Right ventricle myocardium superior (tissue), 1 donor: ENCODE measurements at regions of chr13 and their contacts with region 1.

Region 1: DNA sequence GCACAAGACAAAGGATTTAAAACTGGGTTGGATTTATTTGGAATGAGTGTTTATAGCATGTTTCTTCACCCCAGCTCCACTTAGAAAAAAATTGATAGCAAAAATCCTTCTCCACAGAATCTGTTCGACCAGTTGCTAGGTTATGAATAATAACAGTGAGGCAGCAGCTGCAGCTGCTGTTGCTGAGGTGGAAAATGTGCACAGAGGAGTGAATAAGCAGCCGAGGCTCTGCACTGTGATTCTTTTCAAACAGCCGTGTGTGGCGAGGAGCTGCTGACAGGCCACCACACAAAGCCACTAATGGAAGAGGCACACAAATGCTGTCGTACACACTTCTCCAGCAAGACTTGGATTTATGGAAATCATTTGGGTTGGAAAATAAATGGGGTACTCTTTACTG is 6.4 kb upstream of the RASL11A start:
- DNase-seq: no peak
- ATAC-seq: peak; percentile 77

Region 2: GRCh38 chr13:27449936-27450828 is 186.0 kb after region 1 on chr13 and contains the start of gene MTIF3:
- intact Hi-C with region 1: loop called (anchors 10 kb)
- DNase-seq: peak; percentile 97
- ATAC-seq: peak; percentile 92
- total RNA-seq, gene MTIF3: 189 TPM